ENCODE measurements at regions of chr1 and their contacts with region 1.

Region 1: GRCh38 chr1:13748610-13749505 is 48.9 kb downstream of the PRDM2 start:
- DNase-seq: peak; percentile 96
- H3K4me3 Mint-ChIP-seq: peak overlapping the region; percentile 83
- H3K27ac Mint-ChIP-seq: peak overlapping the region; percentile 93
- H3K4me1 Mint-ChIP-seq: peaks cover 50% of the 10 kb centered on the region
- H3K27me3 Mint-ChIP-seq: no peaks in the 10 kb centered on the region

Region 2: DNA sequence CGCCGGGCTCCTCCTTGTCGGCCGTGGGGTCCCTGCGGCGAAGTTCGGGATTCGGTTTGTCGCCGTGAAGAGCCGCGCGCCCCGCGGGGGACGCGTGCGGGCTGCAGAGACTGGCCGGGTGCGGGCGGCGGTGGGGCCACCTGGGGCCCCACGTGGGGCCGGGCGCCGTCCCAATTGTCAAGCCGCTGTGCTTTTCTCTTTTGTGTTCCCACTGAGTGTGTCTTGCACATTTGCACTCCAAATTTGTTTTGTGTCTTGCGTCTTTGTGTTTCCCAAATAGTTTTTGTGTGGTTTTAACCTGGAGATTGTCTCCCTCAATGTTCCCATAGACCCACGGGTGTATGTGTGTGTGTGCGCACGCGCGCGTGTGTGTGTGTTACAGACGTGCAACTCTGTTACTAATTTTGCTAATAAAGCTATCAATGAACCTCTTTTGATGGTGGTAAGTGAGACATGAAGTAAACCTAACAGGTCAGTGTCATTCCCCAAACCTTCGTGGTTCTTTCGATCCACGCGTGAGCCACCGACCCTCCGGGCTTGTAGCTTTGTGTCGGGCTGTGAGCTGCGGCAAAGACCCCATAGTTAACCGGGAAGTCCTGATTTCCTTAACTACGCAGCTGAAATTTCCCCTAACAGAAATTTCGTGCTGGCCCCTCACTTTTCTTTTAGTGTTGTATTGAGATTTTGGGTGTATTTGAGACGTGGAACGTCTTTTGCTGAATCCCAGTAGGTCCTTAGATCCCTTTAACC is 48.2 kb before region 1 on chr1:
- CTCF ChIA-PET with region 1: interaction called, 6 read pairs
- POLR2A ChIA-PET with region 1: interaction called, 22 read pairs
- intact Hi-C with region 1: loop called (anchors 1 kb)
- DNase-seq: peak; percentile 54
- H3K4me3 Mint-ChIP-seq: peak overlapping the region; percentile 91
- H3K27ac Mint-ChIP-seq: peak overlapping the region; percentile 97
- H3K4me1 Mint-ChIP-seq: peaks cover 47% of the 10 kb centered on the region
- H3K27me3 Mint-ChIP-seq: no peaks in the 10 kb centered on the region

Region 3: DNA sequence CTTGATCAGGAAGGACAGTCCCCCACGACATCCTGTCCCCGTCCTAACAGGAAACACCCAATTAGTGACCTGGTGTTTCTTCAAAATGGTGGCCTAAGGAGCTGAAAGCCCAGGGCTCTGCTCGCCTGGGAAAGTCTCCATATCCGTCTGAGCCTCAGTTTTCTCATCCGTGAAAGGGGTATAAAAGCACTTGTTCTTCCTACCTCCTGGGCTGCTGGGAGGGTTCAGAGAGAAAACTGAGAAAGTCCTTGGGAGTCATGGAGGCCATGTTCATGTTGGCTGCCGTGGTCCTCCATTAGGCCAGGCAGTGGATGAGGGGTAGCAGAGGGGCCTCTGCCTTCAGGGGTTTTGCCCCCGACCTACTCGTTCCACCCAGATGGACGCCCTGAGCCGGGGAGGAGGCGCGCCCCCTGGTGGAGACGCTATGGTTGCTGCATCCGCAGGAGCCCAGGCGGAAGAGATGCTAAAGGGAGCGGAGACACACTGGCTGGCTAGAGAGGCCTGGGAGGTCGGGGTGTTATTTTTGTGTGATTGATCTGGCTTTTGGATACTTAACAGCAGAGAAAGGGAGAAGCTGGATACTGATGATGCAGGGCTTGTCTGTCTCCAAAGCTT is 64.6 kb after region 1 on chr1:
- CTCF ChIA-PET with region 1: no interaction called
- POLR2A ChIA-PET with region 1: no interaction called
- intact Hi-C with region 1: no loop called
- DNase-seq: peak; percentile 73
- H3K4me3 Mint-ChIP-seq: no peak overlapping the region
- H3K27ac Mint-ChIP-seq: no peak overlapping the region
- H3K4me1 Mint-ChIP-seq: peaks cover 28% of the 10 kb centered on the region
- H3K27me3 Mint-ChIP-seq: no peaks in the 10 kb centered on the region

Measured in activated CD4-positive, alpha-beta memory T cell treated with anti-CD3 and anti-CD28 coated beads for 36 hours (primary cell).